Naive thymus-derived CD4-positive, alpha-beta T cell (primary cell): ENCODE measurements at regions of chrX and their contacts with region 1.

Region 1: GRCh38 chrX:11758400-11759171 is 549 bp downstream of the MSL3 start:
- DNase-seq: peak; percentile 86 to 91 (median 89)
- ATAC-seq: peak; percentile 86
- H3K4me3 ChIP-seq: peak overlapping the region; percentile 95
- H3K4me3 Mint-ChIP-seq: peak overlapping the region; percentile 88 to 100 (median 97)
- H3K27ac ChIP-seq: peak overlapping the region; percentile 93
- H3K27ac Mint-ChIP-seq: peak overlapping the region; percentile 95 to 100 (median 99)
- H3K4me1 ChIP-seq: peaks cover 6 to 11% of the 10 kb centered on the region in 2 donors
- H3K4me1 Mint-ChIP-seq: peaks cover 1 to 48% (median 30%) of the 10 kb centered on the region in 7 donors
- H3K27me3 ChIP-seq: no peaks in the 10 kb centered on the region
- H3K27me3 Mint-ChIP-seq: peaks cover 0 to 24% (median 0%) of the 10 kb centered on the region in 5 donors

Region 2: GRCh38 chrX:10014462-10015356 is 1743.9 kb before region 1 on chrX:
- CTCF ChIA-PET with region 1: no interaction called
- POLR2A ChIA-PET with region 1: no interaction called
- intact Hi-C with region 1: loop called in 1 of 2 experiments (anchors 10 kb)
- DNase-seq: peak; percentile 62 to 84 (median 78)
- ATAC-seq: peak; percentile 97
- H3K4me3 ChIP-seq: peak overlapping the region; percentile 37
- H3K4me3 Mint-ChIP-seq: peak overlapping the region; percentile 50 to 89 (median 64)
- H3K27ac ChIP-seq: peak overlapping the region; percentile 64
- H3K27ac Mint-ChIP-seq: peak overlapping the region in 4 of 9 donors; percentile 45 to 75 (median 58)
- H3K4me1 ChIP-seq: peaks cover 7 to 13% of the 10 kb centered on the region in 2 donors
- H3K4me1 Mint-ChIP-seq: peaks cover 17 to 51% (median 43%) of the 10 kb centered on the region in 7 donors
- H3K27me3 ChIP-seq: no peaks in the 10 kb centered on the region
- H3K27me3 Mint-ChIP-seq: peaks cover 0 to 4% (median 0%) of the 10 kb centered on the region in 5 donors

Region 3: DNA sequence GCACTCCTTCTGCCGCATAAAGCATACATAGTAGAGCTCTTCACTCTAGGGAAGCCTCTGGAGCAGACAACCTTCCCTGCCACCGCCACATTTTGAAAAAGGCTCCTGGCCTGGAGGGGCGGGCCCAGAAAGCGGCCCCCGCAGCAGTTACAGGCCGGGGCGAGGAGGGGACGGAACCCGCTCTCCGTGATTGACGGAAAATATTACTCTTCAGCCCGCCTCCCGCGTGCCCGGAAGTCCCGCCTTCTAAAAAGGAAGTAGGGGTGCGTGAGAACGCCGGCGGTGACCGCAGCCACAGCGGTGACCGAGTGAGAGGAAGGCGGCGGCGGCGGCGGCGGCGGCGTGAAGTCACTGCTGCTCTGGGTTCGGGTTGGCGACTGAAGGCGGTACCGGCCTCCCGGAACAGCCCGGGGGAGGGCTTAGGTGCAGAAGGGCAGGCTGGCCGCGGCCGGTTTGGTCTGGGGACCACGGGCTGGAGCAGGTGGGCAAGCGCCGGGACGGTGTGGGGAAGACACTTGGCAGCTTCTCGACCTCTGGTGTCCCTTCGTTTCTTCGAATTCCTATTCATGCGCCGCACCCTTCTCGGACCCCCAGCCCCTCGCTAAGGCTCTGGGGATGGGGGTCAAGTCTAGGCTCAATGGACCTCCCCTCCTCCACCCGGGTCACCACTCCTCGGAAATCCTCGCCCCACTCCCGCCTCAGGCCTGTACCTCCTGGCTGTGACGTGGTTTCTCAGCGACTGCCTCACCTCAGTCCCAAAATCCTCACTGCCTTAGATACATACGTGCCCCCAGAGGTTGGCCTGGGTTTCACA is 647.3 kb before region 1 on chrX and contains the start of gene HCCS:
- CTCF ChIA-PET with region 1: no interaction called
- POLR2A ChIA-PET with region 1: no interaction called
- intact Hi-C with region 1: loop called (anchors 2 kb)
- DNase-seq: peak; percentile 59 to 86 (median 81)
- ATAC-seq: peak; percentile 94
- H3K4me3 ChIP-seq: peak within 1 kb of the TSS; percentile 73
- H3K4me3 Mint-ChIP-seq: peak within 1 kb of the TSS in 4 of 10 donors; percentile 95 to 98 (median 96)
- H3K27ac ChIP-seq: peak within 1 kb of the TSS; percentile 87
- H3K27ac Mint-ChIP-seq: peak within 1 kb of the TSS in 7 of 9 donors; percentile 90 to 99 (median 96)
- H3K4me1 ChIP-seq: no peaks in the 10 kb centered on the region
- H3K4me1 Mint-ChIP-seq: peaks cover 7 to 33% (median 24%) of the 10 kb centered on the region in 7 donors
- H3K27me3 ChIP-seq: no peaks in the 10 kb centered on the region
- H3K27me3 Mint-ChIP-seq: no peaks in the 10 kb centered on the region
- total RNA-seq, gene HCCS: 5.6 to 19.9 (median 13.3) TPM

Region 4: DNA sequence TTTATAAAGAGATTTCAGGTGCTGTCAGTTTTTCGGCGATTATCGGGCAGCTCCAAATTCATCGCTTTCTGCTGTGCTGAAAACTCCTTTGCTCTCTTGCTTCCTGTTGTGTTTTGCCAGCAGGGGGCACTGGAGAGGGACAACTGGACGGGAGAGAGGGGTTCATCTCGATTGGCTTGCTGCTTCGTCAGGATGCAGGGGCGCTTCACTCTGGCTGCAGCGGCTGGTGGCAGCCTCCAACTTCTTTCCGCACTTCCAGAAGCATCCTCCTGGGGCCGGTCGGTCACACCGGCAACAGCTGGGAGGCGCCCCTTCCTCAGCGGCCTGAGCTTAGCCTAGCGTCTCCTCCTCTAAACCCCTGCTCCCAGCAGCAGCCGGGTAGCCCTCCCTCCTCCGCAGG is 29.0 kb after region 1 on chrX:
- CTCF ChIA-PET with region 1: interaction called, 3 read pairs
- POLR2A ChIA-PET with region 1: no interaction called
- intact Hi-C with region 1: loop called (anchors 1 to 2 kb)
- DNase-seq: peak in 8 of 9 donors; percentile 39 to 70 (median 63)
- ATAC-seq: peak; percentile 79
- H3K4me3 ChIP-seq: peak overlapping the region; percentile 35
- H3K4me3 Mint-ChIP-seq: peak overlapping the region; percentile 53 to 86 (median 75)
- H3K27ac ChIP-seq: peak overlapping the region; percentile 17
- H3K27ac Mint-ChIP-seq: peak overlapping the region in 6 of 9 donors; percentile 25 to 70 (median 45)
- H3K4me1 ChIP-seq: peaks cover 3 to 16% of the 10 kb centered on the region in 2 donors
- H3K4me1 Mint-ChIP-seq: peaks cover under 1 to 44% (median 32%) of the 10 kb centered on the region in 7 donors
- H3K27me3 ChIP-seq: no peaks in the 10 kb centered on the region
- H3K27me3 Mint-ChIP-seq: no peaks in the 10 kb centered on the region

Region 5: GRCh38 chrX:12791257-12792228 is 1033.0 kb after region 1 on chrX and contains the start of gene PRPS2:
- CTCF ChIA-PET with region 1: no interaction called
- POLR2A ChIA-PET with region 1: no interaction called
- intact Hi-C with region 1: loop called in 1 of 2 experiments (anchors 5 kb)
- DNase-seq: peak; percentile 39 to 74 (median 69)
- ATAC-seq: peak; percentile 96
- H3K4me3 ChIP-seq: peak within 1 kb of the TSS; percentile 74
- H3K4me3 Mint-ChIP-seq: peak within 1 kb of the TSS; percentile 85 to 92 (median 88)
- H3K27ac ChIP-seq: peak within 1 kb of the TSS; percentile 73
- H3K27ac Mint-ChIP-seq: peak within 1 kb of the TSS; percentile 59 to 86 (median 81)
- H3K4me1 ChIP-seq: peaks cover 0 to 6% of the 10 kb centered on the region in 2 donors
- H3K4me1 Mint-ChIP-seq: peaks cover 8 to 44% (median 34%) of the 10 kb centered on the region in 7 donors
- H3K27me3 ChIP-seq: no peaks in the 10 kb centered on the region
- H3K27me3 Mint-ChIP-seq: peaks cover 0 to 16% (median 0%) of the 10 kb centered on the region in 5 donors
- total RNA-seq, gene PRPS2: 24.7 to 95.8 (median 32.0) TPM

Region 6: DNA sequence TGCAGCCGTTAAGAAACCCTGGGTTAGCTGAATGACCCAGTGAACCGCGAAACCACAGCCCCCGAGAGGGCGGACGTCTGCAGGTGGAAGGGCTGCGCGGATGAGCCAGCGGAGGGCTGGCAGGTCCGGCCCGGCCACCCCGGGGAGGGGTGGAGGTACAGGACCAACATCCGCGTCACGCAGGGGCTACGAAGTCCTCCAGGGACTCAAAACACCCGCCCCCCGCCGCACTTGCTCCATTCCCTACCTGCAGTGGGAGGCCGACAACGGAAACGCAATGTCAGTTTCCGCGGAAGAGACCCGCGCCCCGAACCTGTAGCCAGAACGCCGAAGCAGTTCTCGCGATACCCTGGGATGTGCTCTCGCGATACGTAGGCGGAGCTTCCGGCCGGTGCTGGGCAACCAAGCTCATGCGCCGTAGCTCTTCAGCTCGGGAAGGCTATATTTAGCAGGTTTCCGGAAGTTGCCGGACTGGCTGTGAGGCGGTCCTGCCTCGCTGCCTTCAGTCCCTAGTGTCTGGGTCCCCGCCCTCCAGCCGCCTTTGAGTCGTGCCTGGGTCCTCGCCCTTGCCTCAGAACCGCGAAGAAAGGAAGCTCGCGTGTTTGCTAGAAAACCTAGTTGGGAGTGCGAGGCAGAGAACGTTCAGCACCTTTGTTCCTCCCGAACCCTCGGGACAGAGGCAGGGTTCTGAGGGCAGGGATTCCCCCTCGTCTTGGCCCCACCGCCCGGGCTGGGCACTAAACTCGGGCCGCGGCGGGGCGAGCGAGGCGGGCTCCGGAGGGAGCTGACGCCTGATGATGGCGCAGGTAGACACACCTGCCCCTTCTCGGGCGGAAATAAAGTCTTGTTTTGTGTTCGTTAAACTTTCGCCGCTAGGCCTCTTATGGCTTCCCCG is 1975.9 kb after region 1 on chrX and contains the starts of genes OFD1 and TRAPPC2:
- CTCF ChIA-PET with region 1: no interaction called
- POLR2A ChIA-PET with region 1: no interaction called
- intact Hi-C with region 1: loop called in 1 of 2 experiments (anchors 10 kb)
- DNase-seq: peak; percentile 76 to 92 (median 87)
- ATAC-seq: peak; percentile 94
- H3K4me3 ChIP-seq: peak within 1 kb of the TSS; percentile 85
- H3K4me3 Mint-ChIP-seq: peak within 1 kb of the TSS; percentile 82 to 99 (median 94)
- H3K27ac ChIP-seq: peak within 1 kb of the TSS; percentile 99
- H3K27ac Mint-ChIP-seq: peak within 1 kb of the TSS; percentile 95 to 99 (median 97)
- H3K4me1 ChIP-seq: peaks cover 12 to 20% of the 10 kb centered on the region in 2 donors
- H3K4me1 Mint-ChIP-seq: peaks cover 21 to 66% (median 58%) of the 10 kb centered on the region in 7 donors
- H3K27me3 ChIP-seq: no peaks in the 10 kb centered on the region
- H3K27me3 Mint-ChIP-seq: no peaks in the 10 kb centered on the region
- total RNA-seq, gene OFD1: 30.4 to 142 (median 72.5) TPM
- total RNA-seq, gene TRAPPC2: 20.7 to 31.1 (median 23.5) TPM